Activated naive CD4-positive, alpha-beta T cell treated with anti-CD3 and anti-CD28 coated beads, Interleukin-2, amount 10 ng/mL, durations not matched to agents 7 days and 5 days (primary cell): ENCODE measurements at regions of chr5 and their contacts with region 1.

Region 1: DNA sequence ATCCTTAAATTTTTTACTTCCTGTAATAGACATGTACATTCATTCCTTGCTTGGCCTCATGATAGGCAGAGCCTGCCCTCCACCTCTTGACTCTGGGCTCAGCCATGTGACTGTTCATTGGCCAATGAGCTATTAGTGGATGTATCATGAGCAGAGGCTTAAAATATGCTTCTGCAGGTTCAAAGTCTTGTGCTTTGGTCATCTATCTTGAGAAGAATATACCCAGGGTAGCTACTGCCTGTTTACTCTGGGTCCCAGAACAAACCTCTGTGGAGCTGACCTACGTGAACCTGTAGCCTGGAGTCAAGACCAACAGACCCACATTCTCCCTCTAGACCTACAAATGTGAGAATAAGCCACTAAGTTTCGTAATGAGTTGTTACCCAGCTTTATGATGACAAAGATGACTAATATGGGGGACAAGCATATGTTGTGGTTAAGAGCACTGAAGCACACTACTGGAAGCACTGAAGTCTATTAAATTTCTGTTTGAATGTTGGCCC is 244.4 kb downstream of the MAST4 start:
- DNase-seq: peak; percentile 36
- H3K4me3 Mint-ChIP-seq: no peak overlapping the region
- H3K27ac Mint-ChIP-seq: peak overlapping the region; percentile 85
- H3K4me1 Mint-ChIP-seq: peaks cover 54% of the 10 kb centered on the region
- H3K27me3 Mint-ChIP-seq: no peaks in the 10 kb centered on the region

Region 2: GRCh38 chr5:66779528-66779927 is 61.0 kb before region 1 on chr5:
- CTCF ChIA-PET with region 1: no interaction called
- DNase-seq: no peak
- H3K4me3 Mint-ChIP-seq: no peak overlapping the region
- H3K27ac Mint-ChIP-seq: no peak overlapping the region
- H3K4me1 Mint-ChIP-seq: no peaks in the 10 kb centered on the region
- H3K27me3 Mint-ChIP-seq: peaks cover 3% of the 10 kb centered on the region

Region 3: GRCh38 chr5:66814146-66814991 is 26.2 kb before region 1 on chr5:
- CTCF ChIA-PET with region 1: interaction called, 20 read pairs
- DNase-seq: peak; percentile 70
- H3K4me3 Mint-ChIP-seq: no peak overlapping the region
- H3K27ac Mint-ChIP-seq: no peak overlapping the region
- H3K4me1 Mint-ChIP-seq: peaks cover 23% of the 10 kb centered on the region
- H3K27me3 Mint-ChIP-seq: peaks cover 16% of the 10 kb centered on the region

Region 4: DNA sequence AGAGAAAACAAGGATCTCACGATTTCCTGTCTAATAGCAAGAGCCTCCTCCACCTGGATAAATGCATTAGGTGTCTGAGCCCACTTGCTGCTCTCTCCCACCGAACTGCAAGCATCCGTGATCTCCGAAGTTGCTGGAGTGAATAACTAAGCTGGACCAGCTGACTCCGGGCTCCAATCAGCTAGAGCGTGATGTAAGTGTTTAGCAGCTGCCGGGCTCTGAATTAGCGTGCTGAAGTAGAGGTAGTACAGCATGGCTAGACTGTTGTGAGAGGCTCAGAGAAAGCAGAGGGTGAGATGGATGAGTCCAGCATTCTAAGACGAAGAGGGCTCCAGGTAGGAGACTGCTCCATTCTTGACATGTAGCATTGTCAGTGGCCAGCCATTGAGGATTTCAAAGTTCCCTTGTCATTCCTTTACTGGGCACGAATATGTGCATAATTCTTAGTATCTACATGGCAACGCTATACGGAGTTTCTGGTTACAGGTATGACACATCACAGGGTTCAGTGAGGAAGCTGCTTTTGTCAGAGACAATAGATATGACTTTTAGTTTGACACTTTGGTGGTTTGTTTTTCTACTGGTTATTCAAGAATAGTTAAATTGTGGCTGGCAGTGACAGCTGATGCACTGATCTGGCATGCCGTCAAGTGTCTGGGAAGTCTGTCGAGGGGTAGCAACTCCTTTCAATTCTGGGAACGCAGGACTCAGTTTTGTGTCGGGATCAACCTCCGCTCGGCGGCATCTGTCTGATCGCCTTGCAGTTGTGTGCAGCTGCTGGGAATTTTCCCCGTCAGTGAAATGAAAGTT is 11.8 kb before region 1 on chr5:
- CTCF ChIA-PET with region 1: interaction called, 52 read pairs
- DNase-seq: peak; percentile 83
- H3K4me3 Mint-ChIP-seq: peak overlapping the region; percentile 77
- H3K27ac Mint-ChIP-seq: peak overlapping the region; percentile 93
- H3K4me1 Mint-ChIP-seq: peaks cover 58% of the 10 kb centered on the region
- H3K27me3 Mint-ChIP-seq: no peaks in the 10 kb centered on the region

Region 5: DNA sequence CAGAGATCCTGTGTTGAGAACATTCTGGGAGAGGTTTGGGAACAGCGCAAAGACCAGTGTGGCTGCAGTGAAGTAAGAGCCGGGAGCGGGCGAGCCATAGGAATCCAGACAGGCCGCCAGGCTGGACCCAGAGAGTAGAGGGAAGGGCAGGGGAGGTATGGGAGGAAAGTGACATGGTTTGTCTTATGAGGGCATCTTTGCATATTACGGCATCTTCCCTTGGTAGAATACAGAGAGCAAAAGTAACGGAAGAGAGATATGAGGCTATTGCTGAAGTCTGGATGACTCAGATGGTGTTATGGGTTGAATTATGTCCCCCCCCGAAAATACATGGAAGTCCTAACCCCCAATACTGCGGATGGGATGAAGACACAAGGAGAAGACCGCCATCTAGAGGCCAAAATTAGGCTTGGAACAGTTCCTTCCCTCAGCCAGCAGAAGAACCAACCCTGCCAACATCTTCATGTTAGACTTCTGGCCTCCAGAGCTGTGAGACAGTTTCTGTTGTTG is 23.8 kb after region 1 on chr5:
- CTCF ChIA-PET with region 1: interaction called, 24 read pairs
- DNase-seq: peak; percentile 42
- H3K4me3 Mint-ChIP-seq: no peak overlapping the region
- H3K27ac Mint-ChIP-seq: no peak overlapping the region
- H3K4me1 Mint-ChIP-seq: peaks cover 4% of the 10 kb centered on the region
- H3K27me3 Mint-ChIP-seq: peaks cover 14% of the 10 kb centered on the region

Region 6: GRCh38 chr5:66931651-66932050 is 91.1 kb after region 1 on chr5:
- CTCF ChIA-PET with region 1: no interaction called
- DNase-seq: no peak
- H3K4me3 Mint-ChIP-seq: no peak overlapping the region
- H3K27ac Mint-ChIP-seq: no peak overlapping the region
- H3K4me1 Mint-ChIP-seq: no peaks in the 10 kb centered on the region
- H3K27me3 Mint-ChIP-seq: peaks cover 10% of the 10 kb centered on the region